ENCODE measurements at regions of chr1 and their contacts with region 1.

Region 1: GRCh38 chr1:226827968-226828513 is 42.4 kb upstream of the PSEN2 start:
- DNase-seq: peak; percentile 97
- ATAC-seq: peak; percentile 100
- H3K4me3 Mint-ChIP-seq: no peak overlapping the region
- H3K27ac Mint-ChIP-seq: peak overlapping the region; percentile 92
- H3K4me1 Mint-ChIP-seq: peaks cover 14% of the 10 kb centered on the region
- H3K27me3 Mint-ChIP-seq: peaks cover 4% of the 10 kb centered on the region

Region 2: DNA sequence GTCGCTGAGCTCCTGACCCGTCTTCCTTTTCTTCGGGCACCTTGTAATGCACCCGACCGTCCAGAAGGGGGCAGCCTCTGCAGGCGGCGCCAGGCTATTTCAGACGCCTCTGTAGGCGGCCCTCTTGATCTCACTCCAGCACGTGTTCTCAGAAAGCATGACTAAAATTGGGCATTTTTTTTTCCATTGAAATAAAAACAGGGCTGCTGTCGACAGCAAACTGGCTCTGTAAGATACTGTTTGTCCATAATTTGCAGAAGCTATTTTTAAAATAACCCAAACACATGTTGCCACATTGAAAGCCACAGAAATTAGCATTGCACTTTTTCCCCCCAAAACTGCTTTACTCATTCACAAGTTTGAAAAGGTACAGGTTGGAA is 201.5 kb before region 1 on chr1:
- CTCF ChIA-PET with region 1: interaction called, 79 read pairs
- DNase-seq: peak; percentile 87
- ATAC-seq: peak; percentile 92
- H3K4me3 Mint-ChIP-seq: no peak overlapping the region
- H3K27ac Mint-ChIP-seq: peak overlapping the region; percentile 14
- H3K4me1 Mint-ChIP-seq: peaks cover 16% of the 10 kb centered on the region
- H3K27me3 Mint-ChIP-seq: peaks cover 3% of the 10 kb centered on the region

Region 3: DNA sequence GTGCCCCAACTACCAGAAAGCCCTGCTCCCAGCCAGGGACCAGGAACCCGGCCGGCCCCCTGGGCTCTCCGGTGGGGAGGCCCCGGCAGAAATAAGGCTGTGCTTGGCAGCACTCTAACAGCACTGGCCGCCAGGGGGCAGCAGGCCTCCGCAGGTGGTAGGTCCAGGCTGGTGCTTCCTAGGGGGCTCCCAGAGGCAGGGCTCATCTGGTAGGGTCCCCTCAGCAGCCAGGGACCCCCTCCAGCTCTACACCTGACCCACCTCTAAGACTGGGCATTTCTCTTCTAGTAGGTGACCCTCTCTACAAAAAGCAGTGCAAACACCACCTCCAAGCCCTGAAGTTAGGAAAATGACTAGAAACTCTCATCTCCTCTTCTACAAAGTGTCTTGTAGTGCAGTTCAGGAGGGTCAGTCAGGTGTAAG is 193.9 kb before region 1 on chr1:
- CTCF ChIA-PET with region 1: interaction called, 79 read pairs
- DNase-seq: peak; percentile 84
- ATAC-seq: peak; percentile 90
- H3K4me3 Mint-ChIP-seq: no peak overlapping the region
- H3K27ac Mint-ChIP-seq: peak overlapping the region; percentile 17
- H3K4me1 Mint-ChIP-seq: peaks cover 28% of the 10 kb centered on the region
- H3K27me3 Mint-ChIP-seq: no peaks in the 10 kb centered on the region

Region 4: GRCh38 chr1:226649780-226650179 is 178.3 kb before region 1 on chr1:
- CTCF ChIA-PET with region 1: interaction called, 11 read pairs
- DNase-seq: peak; percentile 59
- ATAC-seq: no peak
- H3K4me3 Mint-ChIP-seq: no peak overlapping the region
- H3K27ac Mint-ChIP-seq: peak overlapping the region; percentile 61
- H3K4me1 Mint-ChIP-seq: peaks cover 55% of the 10 kb centered on the region
- H3K27me3 Mint-ChIP-seq: no peaks in the 10 kb centered on the region

Region 5: GRCh38 chr1:226687426-226687825 is 140.6 kb before region 1 on chr1:
- CTCF ChIA-PET with region 1: interaction called, 10 read pairs
- DNase-seq: no peak
- ATAC-seq: peak; percentile 32
- H3K4me3 Mint-ChIP-seq: no peak overlapping the region
- H3K27ac Mint-ChIP-seq: no peak overlapping the region
- H3K4me1 Mint-ChIP-seq: peaks cover 84% of the 10 kb centered on the region
- H3K27me3 Mint-ChIP-seq: no peaks in the 10 kb centered on the region

Region 6: GRCh38 chr1:226708342-226708780 is 119.7 kb before region 1 on chr1:
- CTCF ChIA-PET with region 1: interaction called, 23 read pairs
- DNase-seq: no peak
- ATAC-seq: peak; percentile 28
- H3K4me3 Mint-ChIP-seq: no peak overlapping the region
- H3K27ac Mint-ChIP-seq: peak overlapping the region; percentile 79
- H3K4me1 Mint-ChIP-seq: peaks cover 70% of the 10 kb centered on the region
- H3K27me3 Mint-ChIP-seq: no peaks in the 10 kb centered on the region

Measured in activated CD8-positive, alpha-beta memory T cell treated with anti-CD3 and anti-CD28 coated beads, Interleukin-2, amount 10 ng/mL, durations not matched to agents 7 days and 5 days (primary cell).